ENCODE measurements at regions of chr9 and their contacts with region 1.

Region 1: GRCh38 chr9:124776954-124777665 is at the start of gene OLFML2A:
- DNase-seq: peak in 1 of 2 donors; percentile 47
- ATAC-seq: peak; percentile 8 to 50 (median 32)
- H3K4me3 ChIP-seq: peak within 1 kb of the TSS; percentile 54 to 71 (median 63)
- H3K27ac ChIP-seq: peak within 1 kb of the TSS in 9 of 10 donors; percentile 45 to 81 (median 68)
- H3K4me1 ChIP-seq: peaks cover 14 to 69% (median 46%) of the 10 kb centered on the region in 9 donors
- H3K27me3 ChIP-seq: peaks cover 0 to 25% (median 0%) of the 10 kb centered on the region in 7 donors
- CTCF ChIP-seq: peak in 8 of 9 donors; percentile 5 to 66 (median 48)
- total RNA-seq, gene OLFML2A: 21.9 to 51.2 (median 32.5) TPM

Region 2: DNA sequence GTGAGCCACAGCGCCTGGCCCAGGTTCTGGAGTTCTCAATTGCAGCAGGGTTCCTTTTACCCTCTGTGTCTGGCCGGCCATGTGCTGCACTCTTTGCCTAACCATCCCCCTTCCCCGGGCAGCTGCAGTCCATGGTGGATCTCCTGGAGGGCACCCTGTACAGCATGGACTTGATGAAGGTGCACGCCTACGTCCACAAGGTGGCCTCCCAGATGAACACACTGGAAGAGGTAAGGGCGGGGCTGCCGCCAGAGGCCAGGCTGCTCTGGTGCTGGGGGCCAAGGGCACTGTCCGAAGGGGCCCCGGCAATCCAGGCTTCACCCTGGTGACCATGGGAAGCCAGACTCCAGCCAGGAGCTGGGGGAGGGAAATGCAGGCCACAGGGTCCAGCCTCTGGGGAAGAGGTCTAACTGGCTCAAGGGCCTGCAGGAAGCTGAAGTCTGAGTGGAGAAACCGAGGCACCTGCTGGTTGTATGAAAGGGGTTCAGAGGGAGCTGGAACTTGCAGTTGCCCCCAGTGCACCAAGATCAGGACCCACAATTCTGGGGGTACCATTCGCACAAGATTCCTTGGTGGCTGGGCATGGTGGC is 17.9 kb after region 1 on chr9:
- intact Hi-C with region 1: loop called in 1 of 10 experiments (anchors 2 kb)
- DNase-seq: no peak
- ATAC-seq: peak; percentile 16 to 45 (median 29)
- H3K4me3 ChIP-seq: no peak overlapping the region
- H3K27ac ChIP-seq: peak overlapping the region in 7 of 10 donors; percentile 24 to 76 (median 61)
- H3K4me1 ChIP-seq: peaks cover 19 to 79% (median 46%) of the 10 kb centered on the region in 9 donors
- H3K27me3 ChIP-seq: no peaks in the 10 kb centered on the region
- CTCF ChIP-seq: peak in 5 of 9 donors; percentile 6 to 28 (median 25)

Region 3: DNA sequence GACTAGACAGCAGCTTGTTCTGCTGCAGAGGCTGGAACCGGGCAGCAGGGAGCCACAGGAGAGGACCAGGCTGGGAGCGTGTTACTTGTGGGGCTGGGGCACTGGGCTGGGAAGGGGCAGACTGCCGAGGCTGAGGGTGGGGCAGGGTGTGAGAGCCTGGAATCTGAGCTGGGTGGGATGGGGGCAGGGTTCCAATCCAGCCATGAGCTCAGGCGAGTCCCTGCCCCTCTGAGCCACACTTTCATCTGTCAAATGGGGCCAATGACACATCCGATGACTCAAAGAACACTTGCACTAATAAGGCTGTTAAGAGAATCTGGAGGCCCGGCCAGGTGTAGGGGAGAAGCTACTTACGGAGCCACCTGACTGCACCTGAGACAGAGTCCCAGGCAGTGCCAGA is 57.5 kb after region 1 on chr9:
- intact Hi-C with region 1: loop called in 3 of 10 experiments (anchors 1 to 5 kb)
- DNase-seq: no peak
- ATAC-seq: peak in 7 of 8 donors; percentile 2 to 31 (median 12)
- H3K4me3 ChIP-seq: no peak overlapping the region
- H3K27ac ChIP-seq: peak overlapping the region; percentile 60 to 96 (median 88)
- H3K4me1 ChIP-seq: peaks cover 25 to 62% (median 50%) of the 10 kb centered on the region in 9 donors
- H3K27me3 ChIP-seq: peaks cover 0 to 6% (median 0%) of the 10 kb centered on the region in 7 donors
- CTCF ChIP-seq: no peak

Region 4: GRCh38 chr9:124839612-124840299 is 62.6 kb after region 1 on chr9:
- intact Hi-C with region 1: loop called in 3 of 10 experiments (anchors 5 kb)
- DNase-seq: no peak
- ATAC-seq: peak in 2 of 8 donors; percentile 2 to 28
- H3K4me3 ChIP-seq: no peak overlapping the region
- H3K27ac ChIP-seq: peak overlapping the region in 5 of 10 donors; percentile 12 to 61 (median 47)
- H3K4me1 ChIP-seq: peaks cover 9 to 39% (median 15%) of the 10 kb centered on the region in 9 donors
- H3K27me3 ChIP-seq: peaks cover 0 to 6% (median 0%) of the 10 kb centered on the region in 7 donors
- CTCF ChIP-seq: peak; percentile 12 to 59 (median 48)

Region 5: GRCh38 chr9:124852829-124853531 is 75.9 kb after region 1 on chr9 and contains the start of gene WDR38:
- intact Hi-C with region 1: loop called (anchors 1 to 2 kb)
- DNase-seq: peak; percentile 81 to 83
- ATAC-seq: peak; percentile 89 to 93 (median 90)
- H3K4me3 ChIP-seq: peak within 1 kb of the TSS; percentile 9 to 56 (median 48)
- H3K27ac ChIP-seq: peak within 1 kb of the TSS; percentile 66 to 92 (median 79)
- H3K4me1 ChIP-seq: peaks cover 13 to 42% (median 25%) of the 10 kb centered on the region in 9 donors
- H3K27me3 ChIP-seq: no peaks in the 10 kb centered on the region
- CTCF ChIP-seq: peak; percentile 94 to 100 (median 99)
- total RNA-seq, gene WDR38: 0.22 TPM in 1 of 10 donors, not detected in the others

Measured in heart right ventricle (tissue), 16 donors.